Mammary epithelial cell (primary cell): ENCODE measurements at regions of chr1 and their contacts with region 1.

Region 1: DNA sequence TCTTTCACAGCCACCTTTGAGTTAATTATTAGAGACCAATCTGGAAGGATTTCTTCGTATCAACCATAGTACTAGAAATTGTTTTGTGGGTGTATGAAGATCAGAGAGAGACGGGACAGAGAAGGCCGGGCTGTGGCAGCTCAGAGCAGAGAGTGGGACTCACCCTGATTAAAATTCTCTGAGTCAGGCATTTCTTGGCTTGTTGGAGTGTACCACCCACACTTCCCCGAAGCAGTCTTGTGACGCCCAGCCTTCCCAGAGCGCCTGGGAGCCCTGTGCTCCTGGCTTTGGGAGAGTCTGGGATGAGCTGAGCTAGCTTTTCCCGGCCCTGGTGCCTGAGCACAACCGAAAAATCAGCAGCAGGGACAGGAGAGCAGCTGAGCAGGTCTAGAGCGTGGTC is 19.4 kb downstream of the PLEKHM2 start:
- DNase-seq: peak; percentile 79
- H3K4me3 ChIP-seq: peak overlapping the region in 2 of 3 experiments; percentile 11 to 28
- H3K27ac ChIP-seq: peak overlapping the region; percentile 73
- H3K4me1 ChIP-seq: peaks cover 17% of the 10 kb centered on the region
- H3K27me3 ChIP-seq: no peaks in the 10 kb centered on the region
- CTCF ChIP-seq: no peak

Region 2: GRCh38 chr1:15598436-15598835 is 105.1 kb before region 1 on chr1:
- CTCF ChIA-PET with region 1: no interaction called
- dilution Hi-C with region 1: no loop called
- in situ Hi-C with region 1: no loop called
- intact Hi-C with region 1: loop called (anchors 2 kb)
- DNase-seq: no peak
- H3K4me3 ChIP-seq: no peak overlapping the region
- H3K27ac ChIP-seq: no peak overlapping the region
- H3K4me1 ChIP-seq: no peaks in the 10 kb centered on the region
- H3K27me3 ChIP-seq: no peaks in the 10 kb centered on the region
- CTCF ChIP-seq: no peak

Region 3: DNA sequence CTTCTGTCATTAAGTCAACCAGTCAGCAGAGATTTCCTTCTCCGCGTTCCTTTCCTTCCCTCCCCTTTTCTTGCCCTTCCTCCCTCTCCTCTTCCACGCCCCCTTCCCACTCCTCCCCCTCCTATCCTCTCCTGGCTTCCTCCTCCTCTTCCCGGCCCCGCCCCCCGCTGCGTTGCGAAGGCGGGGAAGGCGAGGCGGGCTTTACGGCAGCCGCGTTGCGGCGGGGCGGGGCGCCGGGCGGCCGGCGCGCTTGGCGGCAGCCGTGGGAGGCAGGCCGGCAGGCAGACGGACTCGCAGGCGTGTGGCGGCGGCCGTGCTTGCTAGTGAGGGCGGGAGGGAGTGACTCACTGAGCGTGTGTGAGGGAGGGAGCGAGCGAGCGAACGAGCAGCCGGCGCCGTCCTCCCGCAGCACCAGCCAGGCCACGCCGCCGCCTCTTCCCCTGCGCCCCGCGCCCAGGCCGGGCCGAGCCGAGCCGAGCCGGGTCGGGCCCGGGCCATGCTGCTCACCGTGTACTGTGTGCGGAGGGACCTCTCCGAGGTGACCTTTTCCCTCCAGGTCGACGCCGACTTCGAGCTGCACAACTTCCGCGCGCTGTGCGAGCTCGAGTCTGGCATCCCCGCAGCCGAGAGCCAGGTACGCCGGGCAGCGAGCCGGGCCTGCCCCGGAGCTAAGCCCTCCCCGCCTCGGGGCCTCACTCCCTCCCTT is 86.2 kb before region 1 on chr1 and contains the start of gene DDI2:
- CTCF ChIA-PET with region 1: no interaction called
- dilution Hi-C with region 1: no loop called
- in situ Hi-C with region 1: no loop called
- intact Hi-C with region 1: loop called (anchors 5 kb)
- DNase-seq: peak; percentile 98
- H3K4me3 ChIP-seq: peak within 1 kb of the TSS; percentile 81 to 99 (median 96)
- H3K27ac ChIP-seq: peak within 1 kb of the TSS; percentile 81
- H3K4me1 ChIP-seq: peaks cover 29% of the 10 kb centered on the region
- H3K27me3 ChIP-seq: no peaks in the 10 kb centered on the region
- CTCF ChIP-seq: no peak
- total RNA-seq, gene DDI2: 22.2 to 29.7 TPM

Region 4: GRCh38 chr1:15627343-15627988 is 76.1 kb before region 1 on chr1:
- CTCF ChIA-PET with region 1: no interaction called
- dilution Hi-C with region 1: no loop called
- in situ Hi-C with region 1: no loop called
- intact Hi-C with region 1: no loop called
- DNase-seq: no peak
- H3K4me3 ChIP-seq: no peak overlapping the region
- H3K27ac ChIP-seq: no peak overlapping the region
- H3K4me1 ChIP-seq: no peaks in the 10 kb centered on the region
- H3K27me3 ChIP-seq: no peaks in the 10 kb centered on the region
- CTCF ChIP-seq: no peak

Region 5: DNA sequence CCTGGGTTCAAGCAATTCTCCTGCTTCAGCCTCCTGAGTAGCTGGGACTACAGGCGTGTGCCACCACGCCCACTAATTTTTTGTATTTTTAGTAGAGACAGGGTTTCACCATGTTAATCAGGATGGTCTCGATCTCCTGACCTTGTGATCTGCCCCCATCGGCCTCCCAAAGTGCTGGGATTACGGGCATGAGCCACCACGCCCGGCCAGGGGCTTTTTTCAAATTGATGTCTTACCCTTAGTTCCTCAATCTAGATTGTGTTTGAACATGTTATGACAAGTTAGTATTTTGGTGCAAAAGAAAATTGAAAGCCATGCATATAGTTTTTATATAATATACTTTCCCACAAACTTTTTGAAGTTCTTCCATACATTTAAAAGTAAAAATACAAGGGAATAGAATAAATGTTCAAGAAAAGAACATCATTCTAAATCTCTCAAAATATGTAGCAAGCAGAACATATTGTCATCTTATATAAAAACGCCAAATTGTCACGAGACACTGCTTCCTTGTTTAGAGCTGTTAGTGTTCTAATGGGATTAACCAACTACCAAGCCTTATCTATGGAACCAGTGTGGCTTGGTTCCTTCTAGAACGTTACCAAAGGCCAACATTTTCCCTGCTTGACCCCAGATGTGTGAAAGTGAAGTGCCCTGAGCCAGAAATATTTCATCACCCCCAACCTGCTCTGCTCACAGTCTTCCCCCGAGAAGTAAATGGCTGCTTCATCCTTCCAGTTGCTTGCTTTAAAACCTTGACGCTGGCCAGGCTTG is 29.0 kb before region 1 on chr1:
- CTCF ChIA-PET with region 1: no interaction called
- dilution Hi-C with region 1: no loop called
- in situ Hi-C with region 1: no loop called
- intact Hi-C with region 1: no loop called
- DNase-seq: no peak
- H3K4me3 ChIP-seq: no peak overlapping the region
- H3K27ac ChIP-seq: no peak overlapping the region
- H3K4me1 ChIP-seq: peaks cover 12% of the 10 kb centered on the region
- H3K27me3 ChIP-seq: no peaks in the 10 kb centered on the region
- CTCF ChIP-seq: no peak